ENCODE measurements at regions of chr22 and their contacts with region 1.

Region 1: DNA sequence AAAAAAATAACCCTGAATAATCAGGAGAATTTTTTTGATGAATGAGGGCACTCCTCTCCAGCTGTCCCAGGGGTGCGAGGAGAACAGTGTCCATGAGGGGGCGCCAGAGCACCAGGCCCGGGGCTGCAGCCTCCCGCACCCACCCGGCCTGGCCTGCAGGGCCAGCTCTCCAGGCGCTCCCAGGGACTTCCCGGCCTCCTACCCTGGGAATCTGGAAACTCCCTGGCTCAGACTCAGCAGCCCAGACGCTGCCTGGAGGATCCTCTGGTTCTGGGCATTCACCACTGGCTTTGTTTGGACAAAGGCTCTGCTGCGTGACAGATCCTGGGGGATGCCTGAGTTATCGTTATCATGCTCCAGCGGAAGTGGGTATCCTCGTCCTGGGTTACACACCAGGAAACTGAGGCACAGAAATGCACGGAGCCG is 31.0 kb downstream of the MCM5 start:
- DNase-seq: peak; percentile 95

Region 2: DNA sequence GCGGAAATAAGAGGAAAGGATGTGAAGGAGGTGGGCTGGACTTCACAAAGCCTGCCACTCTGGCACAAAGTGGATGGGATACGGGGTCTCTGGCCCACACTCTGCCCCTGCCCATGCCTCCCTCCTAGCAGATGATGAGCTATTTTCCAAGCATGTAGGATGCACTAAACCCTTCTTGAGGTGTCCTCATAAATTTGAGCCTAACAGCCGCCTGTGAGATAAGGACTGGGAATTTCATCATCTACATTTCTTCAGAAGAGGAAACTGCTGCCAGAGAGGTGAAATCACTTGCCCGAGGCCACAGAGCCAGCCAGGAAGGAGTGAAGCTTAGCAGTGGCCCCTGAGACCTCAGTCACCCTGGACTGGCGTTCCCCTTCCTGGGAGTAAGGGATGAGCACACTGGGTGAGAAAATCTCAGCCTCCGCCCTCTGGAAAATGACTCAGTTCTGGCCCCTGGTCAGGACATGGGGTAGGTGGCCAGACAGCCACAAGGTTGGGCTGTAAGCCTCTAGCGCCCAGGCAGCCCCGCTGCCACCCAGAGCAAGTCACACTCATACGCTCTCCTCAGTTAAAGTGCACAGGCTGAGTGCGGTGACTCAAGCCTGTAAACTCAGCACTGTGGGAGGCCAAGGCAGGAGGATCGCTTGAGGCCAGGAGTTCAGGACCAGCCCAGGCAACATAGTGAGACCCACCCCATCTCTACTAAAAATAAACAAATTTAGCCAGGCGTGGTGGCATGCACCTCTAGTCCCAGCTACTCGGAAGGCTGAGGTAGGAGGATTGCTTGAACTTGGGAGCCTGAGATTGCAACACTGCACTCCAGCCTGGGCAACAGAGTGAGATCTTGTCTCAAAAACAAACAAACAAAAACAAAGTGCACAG is 158.4 kb after region 1 on chr22:
- intact Hi-C with region 1: loop called in 1 of 2 experiments (anchors 5 kb)
- DNase-seq: peak; percentile 90

Measured in posterior vena cava (tissue), 2 donors.